Dendritic cell treated with granulocyte-macrophage colony-stimulating factor and Interleukin-4, amounts not matched to agents 40 ng/mL and 50 ng/mL, for 4 days (primary cell): ENCODE measurements at regions of chr1 and their contacts with region 1.

Region 1: GRCh38 chr1:204363335-204364124 is 3.8 kb upstream of the PLEKHA6 start:
- H3K4me3 Mint-ChIP-seq: peak overlapping the region; percentile 72
- H3K27ac Mint-ChIP-seq: peak overlapping the region; percentile 50
- H3K4me1 Mint-ChIP-seq: peaks cover 36% of the 10 kb centered on the region
- H3K27me3 Mint-ChIP-seq: peaks cover 63% of the 10 kb centered on the region

Region 2: DNA sequence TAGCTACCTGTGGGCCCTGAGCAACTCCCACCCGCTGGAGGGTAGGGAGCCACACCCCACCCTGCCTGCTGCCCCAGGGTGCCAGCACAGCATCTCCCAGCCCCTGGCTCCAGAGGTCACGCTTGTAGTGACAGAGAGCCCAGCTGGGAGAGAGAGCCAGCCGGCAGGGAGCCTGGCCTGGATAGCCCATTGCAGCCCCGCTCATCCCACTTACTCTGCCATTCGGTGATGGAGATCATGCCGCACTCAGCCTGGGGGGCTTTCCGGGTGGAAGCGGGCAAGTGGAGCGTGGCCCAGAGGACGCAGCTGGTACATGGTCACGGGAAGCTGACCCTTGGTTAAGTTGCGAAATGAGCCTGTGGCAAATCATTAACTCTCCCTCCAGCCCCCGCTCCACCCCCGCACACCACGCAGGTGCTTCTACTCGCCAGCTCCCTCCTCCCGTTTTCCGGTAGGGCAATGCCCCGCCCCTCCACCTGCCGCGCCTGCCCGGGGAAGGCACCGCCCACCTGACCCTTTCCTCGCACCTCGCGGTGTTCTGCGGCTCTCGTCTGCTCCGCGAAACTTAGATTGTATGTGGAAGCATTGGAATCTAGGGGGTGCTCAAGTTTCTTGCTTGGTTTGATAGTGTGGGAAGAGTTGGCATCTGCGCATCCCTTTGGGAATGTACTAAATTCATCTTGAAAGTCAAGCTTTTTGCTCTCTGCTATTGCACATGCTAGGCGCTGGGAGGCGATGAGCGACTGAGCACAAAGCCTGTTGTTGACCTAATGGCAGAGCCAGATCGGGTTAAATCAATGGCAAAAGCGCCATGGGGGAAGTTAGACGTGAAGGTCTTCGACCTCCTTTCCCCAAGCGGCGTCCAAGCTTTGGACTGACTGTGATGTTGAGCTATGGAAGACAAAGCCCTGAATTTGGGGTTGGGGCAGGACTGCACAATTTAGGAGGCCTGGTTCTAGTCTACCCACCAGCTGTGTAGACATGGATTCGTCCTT is 149.6 kb before region 1 on chr1 and contains the start of gene GOLT1A:
- intact Hi-C with region 1: loop called (anchors 1 kb)
- H3K4me3 Mint-ChIP-seq: peak within 1 kb of the TSS; percentile 53
- H3K27ac Mint-ChIP-seq: no peak within 1 kb of the TSS
- H3K4me1 Mint-ChIP-seq: peaks cover 9% of the 10 kb centered on the region
- H3K27me3 Mint-ChIP-seq: peaks cover 15% of the 10 kb centered on the region

Region 3: DNA sequence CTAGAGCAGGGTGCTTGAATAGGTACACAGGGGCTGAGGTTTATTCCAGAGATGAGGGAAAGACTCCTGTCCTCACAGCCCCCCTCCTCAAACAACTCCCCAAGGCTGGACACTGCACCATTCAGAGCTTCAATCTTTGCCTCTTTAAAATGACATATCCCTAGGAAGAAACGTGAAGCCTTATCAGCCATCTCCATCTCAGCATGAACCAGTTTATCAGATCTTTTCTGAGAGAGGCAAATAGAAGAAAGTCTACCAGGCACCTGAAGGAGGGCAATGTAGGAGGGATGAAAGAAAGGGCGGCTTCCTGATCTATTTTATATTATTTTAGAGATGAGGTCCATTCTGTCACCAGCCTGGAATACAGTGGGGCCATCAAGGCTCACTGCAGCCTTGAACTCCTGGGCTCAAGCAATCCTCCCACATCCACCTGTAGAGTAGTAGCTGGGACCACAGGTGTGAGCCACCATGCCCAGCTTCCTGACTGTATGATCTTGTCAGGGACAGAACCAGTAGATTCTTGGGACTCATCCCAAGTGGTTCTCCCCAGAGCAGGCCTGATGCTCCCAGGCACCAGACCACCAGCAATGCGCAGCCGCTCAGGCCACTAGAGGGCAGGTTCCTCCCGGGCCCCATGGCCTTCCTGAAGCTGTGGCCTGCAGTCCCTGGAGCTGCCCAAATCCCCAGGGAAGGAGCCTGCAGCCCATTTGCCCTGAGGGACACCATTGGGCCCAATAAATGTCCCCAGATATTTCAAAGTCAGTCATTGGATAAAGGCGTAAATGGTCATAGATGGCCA is 105.4 kb before region 1 on chr1:
- intact Hi-C with region 1: loop called (anchors 1 kb)
- H3K4me3 Mint-ChIP-seq: no peak overlapping the region
- H3K27ac Mint-ChIP-seq: no peak overlapping the region
- H3K4me1 Mint-ChIP-seq: peaks cover 28% of the 10 kb centered on the region
- H3K27me3 Mint-ChIP-seq: no peaks in the 10 kb centered on the region